ENCODE measurements at regions of chr22 and their contacts with region 1.

Region 1: GRCh38 chr22:28855355-28856094 is 27.8 kb upstream of the ZNRF3 start:
- DNase-seq: peak; percentile 34 to 51 (median 39)
- H3K4me3 ChIP-seq: no peak overlapping the region
- H3K4me3 Mint-ChIP-seq: no peak overlapping the region
- H3K27ac ChIP-seq: no peak overlapping the region
- H3K27ac Mint-ChIP-seq: no peak overlapping the region
- H3K4me1 ChIP-seq: no peaks in the 10 kb centered on the region
- H3K4me1 Mint-ChIP-seq: no peaks in the 10 kb centered on the region
- H3K27me3 ChIP-seq: no peaks in the 10 kb centered on the region
- H3K27me3 Mint-ChIP-seq: peaks cover 0 to 4% (median 3%) of the 10 kb centered on the region in 3 donors
- CTCF ChIP-seq: peak; percentile 88

Region 2: GRCh38 chr22:28800308-28801077 is 55.0 kb before region 1 on chr22 and contains the start of gene XBP1:
- intact Hi-C with region 1: no loop called
- DNase-seq: peak; percentile 92 to 96 (median 96)
- H3K4me3 ChIP-seq: peak within 1 kb of the TSS; percentile 91 to 98 (median 94)
- H3K4me3 Mint-ChIP-seq: peak within 1 kb of the TSS; percentile 91 to 98
- H3K27ac ChIP-seq: peak within 1 kb of the TSS; percentile 98 to 99
- H3K27ac Mint-ChIP-seq: peak within 1 kb of the TSS; percentile 98 to 100 (median 99)
- H3K4me1 ChIP-seq: peaks cover 39 to 50% of the 10 kb centered on the region in 2 donors
- H3K4me1 Mint-ChIP-seq: peaks cover 50% of the 10 kb centered on the region
- H3K27me3 ChIP-seq: no peaks in the 10 kb centered on the region
- H3K27me3 Mint-ChIP-seq: peaks cover 0 to 7% (median 1%) of the 10 kb centered on the region in 3 donors
- CTCF ChIP-seq: no peak
- polyA plus RNA-seq, gene XBP1: 175 to 215 (median 201) TPM

Region 3: DNA sequence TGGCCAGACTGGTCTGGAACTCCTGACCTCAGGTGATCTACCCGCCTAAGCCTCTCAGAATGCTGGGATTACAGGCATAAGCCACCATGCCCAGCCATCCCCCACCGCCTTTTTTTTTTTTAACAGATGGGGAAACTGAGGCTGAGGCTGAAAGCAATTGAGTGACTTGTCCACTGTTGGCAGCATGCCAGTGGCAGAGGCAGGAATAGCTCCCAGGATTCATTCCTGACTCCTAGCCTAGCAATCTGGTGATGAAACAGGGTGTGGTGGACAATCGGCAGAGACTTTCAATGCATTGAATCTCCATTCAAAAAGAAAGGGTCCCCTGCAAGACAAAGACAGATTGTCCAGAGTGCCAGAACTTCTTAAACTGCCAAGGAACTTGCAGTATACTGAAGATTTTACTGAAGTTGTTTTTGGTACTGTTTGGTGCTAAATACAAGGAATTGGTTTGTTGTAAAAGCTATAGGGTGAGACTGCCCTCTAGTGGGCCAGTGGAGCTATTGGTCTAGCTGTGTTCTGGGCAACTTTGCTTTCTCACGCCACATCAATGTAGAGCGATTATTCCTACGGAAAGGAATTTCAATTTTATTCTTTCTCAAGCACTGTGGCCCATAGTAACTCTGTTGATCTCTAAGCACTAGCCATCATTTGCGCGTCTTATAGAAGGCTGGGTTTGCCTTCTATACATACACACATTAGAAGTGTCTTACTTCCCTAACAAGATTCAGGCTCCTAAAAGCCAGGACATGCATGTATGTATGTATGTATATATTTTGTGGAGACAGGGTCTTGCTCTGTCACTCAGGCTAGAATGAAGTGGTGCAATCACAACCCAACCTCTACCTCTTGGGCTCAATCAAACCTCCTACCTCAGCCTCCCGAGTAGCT is 185.1 kb after region 1 on chr22:
- intact Hi-C with region 1: loop called (anchors 1 to 5 kb)
- DNase-seq: peak; percentile 50 to 72 (median 66)
- H3K4me3 ChIP-seq: no peak overlapping the region
- H3K4me3 Mint-ChIP-seq: no peak overlapping the region
- H3K27ac ChIP-seq: no peak overlapping the region
- H3K27ac Mint-ChIP-seq: no peak overlapping the region
- H3K4me1 ChIP-seq: no peaks in the 10 kb centered on the region
- H3K4me1 Mint-ChIP-seq: peaks cover 2% of the 10 kb centered on the region
- H3K27me3 ChIP-seq: no peaks in the 10 kb centered on the region
- H3K27me3 Mint-ChIP-seq: peaks cover 0 to 3% (median 2%) of the 10 kb centered on the region in 3 donors
- CTCF ChIP-seq: peak; percentile 93